Activated T-helper 1 cell treated with anti-CD3 and anti-CD28 coated beads, Interleukin-12 subunit alpha, Interleukin-12 subunit beta, Interleukin-2, Interleukin-4 antibody, amounts not matched to agents 30 ng/mL and 10 ng/mL and 1 ng/mL, durations not matched to agents 14 hours and 24 hours and 36 hours (primary cell): ENCODE measurements at regions of chr3 and their contacts with region 1.

Region 1: GRCh38 chr3:53303957-53304356 is 43.4 kb downstream of the DCP1A start:
- DNase-seq: no peak
- H3K4me3 Mint-ChIP-seq: no peak overlapping the region
- H3K27ac Mint-ChIP-seq: no peak overlapping the region
- H3K4me1 Mint-ChIP-seq: peaks cover 7% of the 10 kb centered on the region
- H3K27me3 Mint-ChIP-seq: no peaks in the 10 kb centered on the region

Region 2: DNA sequence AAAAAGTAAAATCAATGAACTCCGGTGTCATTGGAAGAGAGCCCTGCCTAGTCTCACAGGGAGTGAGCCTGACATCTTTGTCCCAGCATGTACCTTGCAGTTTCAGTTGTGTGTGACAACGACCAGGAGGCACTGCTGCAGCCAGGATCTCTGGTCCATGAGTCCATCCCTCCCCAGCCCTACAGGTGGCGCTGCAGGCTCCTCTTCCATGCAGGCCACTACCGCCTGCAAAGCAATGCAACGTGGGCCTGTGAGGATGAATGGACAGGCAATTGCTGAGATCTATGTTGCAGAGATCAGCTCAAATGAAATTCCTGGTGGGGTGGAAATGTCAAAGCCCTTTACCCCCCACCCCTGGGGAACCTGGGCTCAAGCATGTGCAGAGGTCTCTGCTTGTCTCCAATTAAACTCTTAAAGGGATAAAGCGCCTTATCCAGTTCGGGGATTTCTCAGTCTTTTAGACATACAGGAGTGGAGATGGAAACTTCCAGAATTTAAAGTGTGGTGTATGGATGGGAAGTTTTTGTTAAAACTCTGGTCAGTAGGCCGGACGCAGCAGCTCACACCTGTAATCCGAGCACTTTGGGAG is 84.0 kb before region 1 on chr3:
- intact Hi-C with region 1: loop called (anchors 1 kb)
- DNase-seq: peak; percentile 75
- H3K4me3 Mint-ChIP-seq: no peak overlapping the region
- H3K27ac Mint-ChIP-seq: no peak overlapping the region
- H3K4me1 Mint-ChIP-seq: peaks cover 6% of the 10 kb centered on the region
- H3K27me3 Mint-ChIP-seq: peaks cover 5% of the 10 kb centered on the region

Region 3: GRCh38 chr3:53347261-53348064 is 43.5 kb after region 1 on chr3 and contains the start of gene DCP1A:
- intact Hi-C with region 1: loop called (anchors 1 kb)
- DNase-seq: peak; percentile 96
- H3K4me3 Mint-ChIP-seq: peak within 1 kb of the TSS; percentile 98
- H3K27ac Mint-ChIP-seq: peak within 1 kb of the TSS; percentile 98
- H3K4me1 Mint-ChIP-seq: peaks cover 37% of the 10 kb centered on the region
- H3K27me3 Mint-ChIP-seq: no peaks in the 10 kb centered on the region
- total RNA-seq, gene DCP1A: 46.3 and 48.6 TPM in 2 replicates